ENCODE measurements at regions of chr2 and their contacts with region 1.

Region 1: GRCh38 chr2:42663106-42663780 is 94.8 kb downstream of the MTA3 start:
- DNase-seq: peak; percentile 25
- ATAC-seq: peak; percentile 96
- H3K4me3 Mint-ChIP-seq: peak overlapping the region; percentile 12
- H3K27ac Mint-ChIP-seq: peak overlapping the region; percentile 10
- H3K4me1 Mint-ChIP-seq: peaks cover 17% of the 10 kb centered on the region
- H3K27me3 Mint-ChIP-seq: no peaks in the 10 kb centered on the region
- CTCF ChIP-seq: peak; percentile 67

Region 2: GRCh38 chr2:41869542-41870264 is 793.5 kb before region 1 on chr2:
- CTCF ChIA-PET with region 1: interaction called, 5 read pairs
- POLR2A ChIA-PET with region 1: no interaction called
- intact Hi-C with region 1: loop called (anchors 1 kb)
- DNase-seq: peak; percentile 69
- ATAC-seq: peak; percentile 75
- H3K4me3 Mint-ChIP-seq: no peak overlapping the region
- H3K27ac Mint-ChIP-seq: no peak overlapping the region
- H3K4me1 Mint-ChIP-seq: no peaks in the 10 kb centered on the region
- H3K27me3 Mint-ChIP-seq: peaks cover 16% of the 10 kb centered on the region
- CTCF ChIP-seq: peak; percentile 55

Region 3: GRCh38 chr2:42494355-42495233 is 168.6 kb before region 1 on chr2:
- CTCF ChIA-PET with region 1: interaction called, 32 read pairs
- POLR2A ChIA-PET with region 1: no interaction called
- intact Hi-C with region 1: loop called (anchors 1 kb)
- DNase-seq: peak; percentile 47
- ATAC-seq: peak; percentile 66
- H3K4me3 Mint-ChIP-seq: peak overlapping the region; percentile 92
- H3K27ac Mint-ChIP-seq: peak overlapping the region; percentile 59
- H3K4me1 Mint-ChIP-seq: peaks cover 8% of the 10 kb centered on the region
- H3K27me3 Mint-ChIP-seq: peaks cover 22% of the 10 kb centered on the region
- CTCF ChIP-seq: no peak

Region 4: DNA sequence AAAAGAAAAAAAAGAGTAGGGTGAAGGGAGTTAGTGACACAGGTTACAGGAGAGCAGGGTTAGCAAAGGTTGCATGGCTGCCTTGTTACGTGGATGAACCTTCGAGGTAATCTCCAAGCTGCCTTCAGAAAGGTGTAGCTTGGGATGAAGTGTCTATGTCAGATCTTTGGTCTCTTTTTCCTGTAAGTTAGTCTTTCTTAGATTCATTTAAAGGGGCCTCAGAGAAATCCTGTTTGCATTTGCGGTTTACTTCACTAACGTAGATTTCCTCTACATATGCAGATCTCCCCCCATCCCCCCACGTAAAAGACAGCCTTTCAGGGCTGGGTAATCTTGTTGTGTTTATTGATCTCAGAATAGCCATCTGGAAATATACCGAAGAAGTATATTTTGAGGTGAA is 11.2 kb before region 1 on chr2:
- CTCF ChIA-PET with region 1: interaction called, 10 read pairs
- POLR2A ChIA-PET with region 1: no interaction called
- intact Hi-C with region 1: no loop called
- DNase-seq: no peak
- ATAC-seq: no peak
- H3K4me3 Mint-ChIP-seq: no peak overlapping the region
- H3K27ac Mint-ChIP-seq: no peak overlapping the region
- H3K4me1 Mint-ChIP-seq: peaks cover 6% of the 10 kb centered on the region
- H3K27me3 Mint-ChIP-seq: no peaks in the 10 kb centered on the region
- CTCF ChIP-seq: no peak

Region 5: DNA sequence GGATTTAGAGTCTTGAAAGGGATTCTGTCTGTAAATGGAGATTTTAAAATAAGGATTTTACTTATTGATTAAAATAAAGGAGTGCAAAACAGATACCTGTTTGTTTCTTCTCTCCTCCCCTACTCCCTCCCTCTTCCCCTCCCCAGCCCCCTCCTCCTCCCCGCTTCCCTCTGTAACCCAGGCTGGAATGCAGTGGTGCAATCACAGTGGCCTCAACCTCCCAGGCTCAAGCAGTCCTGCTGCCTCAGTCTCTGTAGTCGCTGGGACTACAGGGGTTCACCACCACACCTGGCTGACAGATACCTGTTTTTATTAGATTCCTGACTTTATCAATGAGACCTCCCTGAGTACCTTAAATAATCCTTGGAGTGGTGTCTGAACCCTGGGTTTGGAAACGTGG is 43.6 kb after region 1 on chr2:
- CTCF ChIA-PET with region 1: no interaction called
- POLR2A ChIA-PET with region 1: no interaction called
- intact Hi-C with region 1: no loop called
- DNase-seq: no peak
- ATAC-seq: no peak
- H3K4me3 Mint-ChIP-seq: no peak overlapping the region
- H3K27ac Mint-ChIP-seq: no peak overlapping the region
- H3K4me1 Mint-ChIP-seq: no peaks in the 10 kb centered on the region
- H3K27me3 Mint-ChIP-seq: no peaks in the 10 kb centered on the region
- CTCF ChIP-seq: no peak